ENCODE measurements at regions of chr7 and their contacts with region 1.

Region 1: GRCh38 chr7:101602484-101603241 is 26.4 kb downstream of the MYL10 start:
- DNase-seq: peak; percentile 94
- H3K4me3 ChIP-seq: no peak overlapping the region; a peak in 1 of 4 replicates
- H3K27ac ChIP-seq: no peak overlapping the region
- H3K4me1 ChIP-seq: peaks cover 0 to 11% of the 10 kb centered on the region in 2 experiments; a peak in 1 of 4 replicates
- H3K27me3 ChIP-seq: no peaks in the 10 kb centered on the region
- CTCF ChIP-seq: peak; percentile 99
- EP300 ChIP-seq: peak in 1 of 2 experiments; percentile 8; a peak in 1 of 4 replicates
- RAD21 ChIP-seq: peak; percentile 98

Region 2: GRCh38 chr7:101265622-101266516 is 336.8 kb before region 1 on chr7:
- CTCF ChIA-PET with region 1: no interaction called
- POLR2A ChIA-PET with region 1: no interaction called
- DNase-seq: no peak
- H3K4me3 ChIP-seq: no peak overlapping the region
- H3K27ac ChIP-seq: no peak overlapping the region
- H3K4me1 ChIP-seq: no peaks in the 10 kb centered on the region
- H3K27me3 ChIP-seq: no peaks in the 10 kb centered on the region
- CTCF ChIP-seq: no peak
- EP300 ChIP-seq: no peak
- RAD21 ChIP-seq: no peak

Region 3: GRCh38 chr7:101519324-101520023 is 83.2 kb before region 1 on chr7:
- CTCF ChIA-PET with region 1: no interaction called
- POLR2A ChIA-PET with region 1: no interaction called
- DNase-seq: no peak
- H3K4me3 ChIP-seq: no peak overlapping the region
- H3K27ac ChIP-seq: no peak overlapping the region
- H3K4me1 ChIP-seq: no peaks in the 10 kb centered on the region; a peak in 1 of 4 replicates
- H3K27me3 ChIP-seq: peaks cover 18% of the 10 kb centered on the region; the same call in 1 of the 2 replicates
- CTCF ChIP-seq: no peak
- EP300 ChIP-seq: no peak
- RAD21 ChIP-seq: no peak

Region 4: DNA sequence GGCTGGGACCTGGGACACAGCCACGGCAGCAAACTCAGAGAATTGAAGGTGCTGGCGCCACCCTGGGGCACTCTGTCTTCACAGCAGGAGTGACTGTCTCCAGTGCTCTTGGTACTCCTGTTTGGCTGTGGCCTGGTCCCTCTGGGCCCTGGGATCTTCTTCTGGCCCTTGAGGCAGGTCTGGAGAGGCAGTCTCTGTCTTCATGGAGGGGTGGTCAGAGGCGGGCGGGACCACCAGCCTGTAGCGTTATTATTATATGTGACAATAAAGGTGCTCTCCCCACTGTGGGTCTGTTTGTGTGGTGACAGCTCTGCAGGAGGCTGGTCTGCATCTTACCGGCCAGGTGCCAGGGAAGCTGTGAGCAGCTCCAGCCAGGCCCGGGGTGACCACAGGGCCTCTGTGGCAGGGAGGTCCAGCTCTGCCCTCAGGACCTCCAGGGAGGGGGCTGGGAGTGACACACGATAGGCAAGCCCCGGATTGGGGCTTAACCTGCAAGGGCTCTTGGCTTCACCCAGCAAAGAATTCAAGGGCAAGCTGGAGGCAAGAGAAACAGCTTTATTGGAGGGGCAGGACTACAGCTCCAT is 43.8 kb before region 1 on chr7:
- CTCF ChIA-PET with region 1: interaction called, 11 read pairs
- POLR2A ChIA-PET with region 1: no interaction called
- DNase-seq: no peak
- H3K4me3 ChIP-seq: no peak overlapping the region
- H3K27ac ChIP-seq: no peak overlapping the region
- H3K4me1 ChIP-seq: no peaks in the 10 kb centered on the region
- H3K27me3 ChIP-seq: peaks cover 17% of the 10 kb centered on the region
- CTCF ChIP-seq: no peak; the same call in 1 of the 2 replicates
- EP300 ChIP-seq: no peak
- RAD21 ChIP-seq: peak; percentile 36

Region 5: GRCh38 chr7:101588131-101588935 is 14.3 kb before region 1 on chr7:
- CTCF ChIA-PET with region 1: interaction called, 47 read pairs
- POLR2A ChIA-PET with region 1: interaction called, 3 read pairs
- DNase-seq: no peak
- H3K4me3 ChIP-seq: no peak overlapping the region
- H3K27ac ChIP-seq: no peak overlapping the region
- H3K4me1 ChIP-seq: peaks cover 0 to 15% of the 10 kb centered on the region in 2 experiments; a peak in 1 of 4 replicates
- H3K27me3 ChIP-seq: no peaks in the 10 kb centered on the region
- CTCF ChIP-seq: no peak
- EP300 ChIP-seq: no peak
- RAD21 ChIP-seq: no peak

Region 6: DNA sequence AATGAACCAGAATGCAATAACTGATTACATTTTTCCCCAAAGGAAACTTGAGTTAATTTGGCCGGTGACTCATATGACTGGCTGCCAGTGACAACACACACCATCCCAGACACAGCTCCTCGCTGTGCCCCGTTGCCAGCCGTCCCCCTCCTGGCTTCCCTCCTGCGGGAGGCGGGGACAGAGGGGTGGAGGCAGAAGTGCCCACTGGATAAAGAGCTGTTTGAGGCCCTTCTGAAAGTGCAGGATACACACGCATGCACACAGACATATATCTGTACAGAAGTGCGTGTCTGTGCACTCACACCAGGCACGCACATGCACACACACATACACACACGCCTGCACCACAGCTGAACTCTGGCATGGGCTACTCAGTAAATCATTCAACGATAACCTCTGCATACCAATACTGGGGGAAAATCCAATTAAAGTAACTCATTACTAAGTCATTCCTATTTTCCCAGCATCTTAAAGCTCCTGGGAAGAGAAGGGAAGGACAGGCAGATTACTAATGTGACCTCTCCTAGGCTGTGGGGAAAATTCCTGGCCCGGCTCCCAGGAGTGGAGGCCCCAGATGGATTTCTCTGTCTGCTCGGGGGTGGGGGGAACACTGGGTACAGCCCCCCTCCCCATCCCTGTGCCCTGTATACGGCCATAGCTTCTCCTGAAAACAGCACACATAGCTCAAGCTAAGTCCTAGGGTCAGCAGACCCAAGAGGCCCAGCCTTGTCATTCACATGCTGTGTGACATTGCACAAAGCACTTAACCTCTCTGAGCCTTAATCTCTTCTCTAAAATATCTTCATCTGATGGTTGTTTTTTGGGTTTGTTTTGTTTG is 78.7 kb after region 1 on chr7:
- CTCF ChIA-PET with region 1: interaction called, 38 read pairs
- POLR2A ChIA-PET with region 1: no interaction called
- DNase-seq: peak; percentile 94
- H3K4me3 ChIP-seq: peak overlapping the region in 1 of 2 experiments; percentile 35; a peak in 1 of 4 replicates
- H3K27ac ChIP-seq: peak overlapping the region; percentile 34 to 88
- H3K4me1 ChIP-seq: peaks cover 15% of the 10 kb centered on the region in 2 experiments; a peak in 3 of 4 replicates
- H3K27me3 ChIP-seq: no peaks in the 10 kb centered on the region
- CTCF ChIP-seq: no peak
- EP300 ChIP-seq: peak; percentile 53 to 62; a peak in 3 of 4 replicates
- RAD21 ChIP-seq: peak; percentile 32; the same call in 1 of the 2 replicates

Region 7: GRCh38 chr7:101815835-101816493 is 213.3 kb after region 1 on chr7:
- CTCF ChIA-PET with region 1: interaction called, 19 read pairs
- POLR2A ChIA-PET with region 1: no interaction called
- DNase-seq: peak; percentile 97
- H3K4me3 ChIP-seq: peak overlapping the region; percentile 53 to 97
- H3K27ac ChIP-seq: peak overlapping the region in 1 of 2 experiments; percentile 94; a peak in 2 of 4 replicates
- H3K4me1 ChIP-seq: peaks cover 18 to 42% of the 10 kb centered on the region in 2 experiments; a peak in 3 of 4 replicates
- H3K27me3 ChIP-seq: no peaks in the 10 kb centered on the region
- CTCF ChIP-seq: no peak
- EP300 ChIP-seq: peak in 1 of 2 experiments; percentile 60; a peak in 1 of 4 replicates
- RAD21 ChIP-seq: peak; percentile 25; the same call in 1 of the 2 replicates

Region 8: GRCh38 chr7:102272075-102272917 is 669.6 kb after region 1 on chr7:
- CTCF ChIA-PET with region 1: interaction called, 82 read pairs
- POLR2A ChIA-PET with region 1: no interaction called
- DNase-seq: peak; percentile 95
- H3K4me3 ChIP-seq: no peak overlapping the region; a peak in 1 of 4 replicates
- H3K27ac ChIP-seq: no peak overlapping the region
- H3K4me1 ChIP-seq: peaks cover 0 to 22% of the 10 kb centered on the region in 2 experiments; a peak in 1 of 4 replicates
- H3K27me3 ChIP-seq: no peaks in the 10 kb centered on the region
- CTCF ChIP-seq: peak; percentile 100
- EP300 ChIP-seq: no peak
- RAD21 ChIP-seq: peak; percentile 99